ENCODE measurements at regions of chr10 and their contacts with region 1.

Region 1: DNA sequence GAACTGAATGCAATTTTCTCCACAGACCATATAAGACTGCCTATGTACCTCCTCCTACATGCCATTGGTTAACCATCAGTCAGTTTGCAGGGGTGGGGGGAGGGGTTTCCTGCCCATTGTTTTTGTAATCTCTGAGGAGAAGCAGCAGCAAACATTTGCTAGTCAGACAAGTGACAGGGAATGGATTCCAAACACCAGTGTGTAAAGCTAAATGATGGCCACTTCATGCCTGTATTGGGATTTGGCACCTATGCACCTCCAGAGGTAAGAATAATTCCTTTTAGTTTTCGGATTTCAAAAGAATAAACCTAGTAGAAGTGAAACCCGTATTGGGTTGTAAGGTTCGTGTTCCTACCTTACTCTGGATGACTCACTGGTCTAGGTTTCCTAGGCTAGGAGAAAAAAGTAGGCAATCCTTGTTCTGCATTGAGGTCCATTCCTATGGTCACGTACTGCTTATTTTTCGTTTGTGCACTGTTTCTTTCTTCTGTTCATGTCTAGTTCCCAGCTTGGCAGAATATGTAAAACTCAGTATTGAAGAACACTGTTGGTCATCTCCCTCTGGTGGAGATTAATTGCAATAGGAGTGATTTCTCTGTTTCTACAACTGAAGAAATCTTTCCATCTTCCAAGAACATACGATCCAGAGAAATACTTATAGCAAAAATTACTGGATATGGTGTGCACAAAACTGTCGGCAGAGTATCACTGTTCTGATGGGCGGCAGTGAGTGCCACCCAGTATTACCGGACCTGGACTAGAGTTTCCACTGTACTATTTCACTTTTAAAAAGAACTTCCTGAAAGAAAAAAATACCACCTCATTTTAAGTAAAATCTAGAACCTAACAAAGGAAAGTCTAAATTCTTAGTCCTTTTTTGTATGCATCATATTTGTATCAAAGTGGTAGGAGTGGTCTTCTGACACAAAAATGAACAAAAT is at the start of gene AKR1C3:
- ATAC-seq: peak in 5 of 8 experiments; percentile 24 to 91 (median 88)
- H3K4me3 ChIP-seq: no peak within 1 kb of the TSS
- H3K27ac ChIP-seq: no peak within 1 kb of the TSS
- H3K4me1 ChIP-seq: no peaks in the 10 kb centered on the region
- total RNA-seq, gene AKR1C3: 0.54 to 76.4 (median 1.6) TPM in 7 of 8 experiments, not detected in the other

Region 2: DNA sequence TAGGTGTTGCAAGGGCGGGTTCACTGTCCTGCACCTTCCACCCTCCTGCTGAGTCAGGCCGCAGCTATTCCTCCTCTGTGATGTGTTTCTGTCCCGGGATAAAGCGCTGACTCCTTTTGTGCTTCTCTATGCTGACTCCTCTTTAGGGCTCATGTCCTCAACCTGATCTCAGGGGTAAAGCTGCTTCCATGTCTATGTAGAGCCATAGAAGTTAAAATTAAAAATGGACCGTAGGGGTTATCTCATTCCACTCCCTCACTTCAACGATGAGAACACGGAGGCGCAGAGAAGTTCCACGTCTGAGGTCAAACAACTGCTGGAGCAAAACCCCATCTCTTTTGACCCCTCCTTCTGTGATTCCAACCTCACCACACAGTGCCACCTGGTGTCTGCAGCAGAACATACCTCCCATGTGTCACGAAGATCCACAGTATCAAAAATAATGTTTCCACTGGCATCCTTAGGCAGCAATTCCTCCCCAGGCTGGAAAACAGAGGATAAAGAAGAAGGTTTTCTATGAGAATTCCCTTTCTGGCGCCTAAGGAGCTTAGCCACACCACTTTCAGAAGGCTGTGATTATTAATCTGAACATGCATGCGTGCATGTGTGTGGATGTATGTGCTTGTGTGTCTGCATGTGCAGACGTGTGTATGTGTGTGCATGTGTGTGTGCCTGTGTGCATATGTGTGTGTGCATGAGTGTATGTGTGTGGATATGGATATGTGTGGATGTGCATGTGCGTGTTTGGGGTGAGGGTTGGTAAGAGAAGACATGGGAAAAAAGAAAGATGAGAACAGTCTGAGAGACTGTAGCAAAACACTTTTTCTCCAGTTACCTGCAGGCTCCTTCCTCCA is 189.0 kb after region 1 on chr10:
- in situ Hi-C with region 1: loop called in 1 of 9 experiments (anchors 10 kb)
- ATAC-seq: peak in 7 of 8 experiments; percentile 45 to 96 (median 51)
- H3K4me3 ChIP-seq: no peak overlapping the region
- H3K27ac ChIP-seq: no peak overlapping the region
- H3K4me1 ChIP-seq: peaks cover 8 to 14% of the 10 kb centered on the region in 2 donors

Measured in motor neuron (in vitro differentiated cells).